ENCODE measurements at regions of chr7 and their contacts with region 1.

Region 1: GRCh38 chr7:106285051-106285854 is 470 bp upstream of the NAMPT start:
- DNase-seq: peak; percentile 100
- ATAC-seq: peak; percentile 83
- H3K4me3 ChIP-seq: peak overlapping the region; percentile 79
- H3K27ac ChIP-seq: peak overlapping the region; percentile 70
- H3K4me1 ChIP-seq: peaks cover 26% of the 10 kb centered on the region
- H3K27me3 ChIP-seq: no peaks in the 10 kb centered on the region
- CTCF ChIP-seq: no peak

Region 2: GRCh38 chr7:105522062-105522936 is 763.0 kb before region 1 on chr7 and contains the start of gene PUS7:
- CTCF ChIA-PET with region 1: no interaction called
- POLR2A ChIA-PET with region 1: no interaction called
- intact Hi-C with region 1: loop called (anchors 2 kb)
- DNase-seq: peak; percentile 97
- ATAC-seq: peak; percentile 90
- H3K4me3 ChIP-seq: peak within 1 kb of the TSS; percentile 91
- H3K27ac ChIP-seq: peak within 1 kb of the TSS; percentile 71
- H3K4me1 ChIP-seq: peaks cover 18% of the 10 kb centered on the region
- H3K27me3 ChIP-seq: no peaks in the 10 kb centered on the region
- CTCF ChIP-seq: no peak
- total RNA-seq, gene PUS7: 22.0 and 37.2 TPM in 2 replicates

Region 3: GRCh38 chr7:106216517-106216922 is 68.7 kb before region 1 on chr7:
- CTCF ChIA-PET with region 1: interaction called, 5 read pairs
- POLR2A ChIA-PET with region 1: interaction called, 20 read pairs
- intact Hi-C with region 1: loop called (anchors 1 kb)
- DNase-seq: peak; percentile 99
- ATAC-seq: peak; percentile 90
- H3K4me3 ChIP-seq: peak overlapping the region; percentile 56
- H3K27ac ChIP-seq: peak overlapping the region; percentile 83
- H3K4me1 ChIP-seq: peaks cover 26% of the 10 kb centered on the region
- H3K27me3 ChIP-seq: no peaks in the 10 kb centered on the region
- CTCF ChIP-seq: no peak

Region 4: DNA sequence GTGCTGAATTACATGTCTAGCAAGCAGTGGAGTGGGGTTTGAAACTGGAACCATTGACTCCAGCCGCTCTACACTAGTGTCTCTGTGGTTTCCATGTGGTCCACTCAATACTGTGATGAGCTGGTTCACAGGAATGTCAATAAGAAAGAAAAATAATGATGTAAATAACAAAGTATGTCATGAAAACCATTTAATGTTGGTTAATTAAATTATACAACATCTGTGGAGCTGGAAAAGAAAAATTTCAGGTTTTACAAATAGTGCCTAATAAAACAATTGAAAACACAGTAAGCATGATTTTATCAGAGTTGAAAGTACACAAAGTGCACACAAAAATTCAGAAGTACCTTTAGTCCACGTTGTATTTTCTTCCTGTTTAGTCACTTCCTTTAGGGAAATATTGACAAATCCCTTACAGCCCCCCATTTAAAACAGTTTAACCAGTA is 28.2 kb after region 1 on chr7:
- CTCF ChIA-PET with region 1: no interaction called
- POLR2A ChIA-PET with region 1: interaction called, 8 read pairs
- intact Hi-C with region 1: loop called (anchors 1 kb)
- DNase-seq: peak; percentile 92
- ATAC-seq: peak; percentile 88
- H3K4me3 ChIP-seq: peak overlapping the region; percentile 41
- H3K27ac ChIP-seq: peak overlapping the region; percentile 72
- H3K4me1 ChIP-seq: peaks cover 50% of the 10 kb centered on the region
- H3K27me3 ChIP-seq: no peaks in the 10 kb centered on the region
- CTCF ChIP-seq: no peak

Region 5: DNA sequence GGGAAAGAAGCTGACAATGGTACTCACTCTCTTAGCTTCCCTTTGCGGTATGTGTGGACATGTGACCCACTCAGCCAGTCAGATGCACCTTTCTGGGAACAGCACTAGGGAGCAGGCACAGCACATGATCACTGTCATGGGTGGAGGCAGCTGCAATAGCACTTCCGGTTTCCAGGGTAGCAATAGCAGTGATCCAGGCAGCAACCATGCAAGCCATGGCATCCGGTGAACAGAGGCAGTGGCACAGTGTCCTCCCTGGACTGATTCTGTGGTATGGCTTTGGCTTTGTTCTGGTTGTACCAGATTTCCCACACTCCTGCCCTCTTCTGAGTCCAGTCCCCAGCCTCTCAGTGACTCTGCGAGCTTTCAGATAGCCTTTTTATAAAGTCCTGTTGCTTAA is 86.4 kb after region 1 on chr7:
- CTCF ChIA-PET with region 1: no interaction called
- POLR2A ChIA-PET with region 1: no interaction called
- intact Hi-C with region 1: no loop called
- DNase-seq: no peak
- ATAC-seq: no peak
- H3K4me3 ChIP-seq: no peak overlapping the region
- H3K27ac ChIP-seq: no peak overlapping the region
- H3K4me1 ChIP-seq: no peaks in the 10 kb centered on the region
- H3K27me3 ChIP-seq: no peaks in the 10 kb centered on the region
- CTCF ChIP-seq: no peak

Region 6: DNA sequence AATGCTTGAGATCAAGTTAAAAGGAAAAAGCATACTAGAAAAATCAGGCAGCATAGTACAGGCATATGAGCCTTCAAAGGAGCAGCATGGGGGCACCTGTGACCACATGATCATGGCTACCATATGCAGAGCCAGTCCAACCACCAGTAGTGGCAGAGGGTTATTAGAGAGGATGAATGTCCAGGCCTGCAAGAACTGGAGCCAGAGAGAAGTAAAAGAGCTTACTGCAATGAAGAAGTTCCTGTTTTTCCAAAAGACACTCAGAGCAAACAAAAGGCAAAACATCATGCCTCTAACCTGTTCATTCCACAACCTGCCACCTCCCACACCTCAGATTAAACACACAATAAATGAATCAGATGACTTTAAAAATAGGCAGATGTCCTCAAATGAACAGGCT is 99.1 kb after region 1 on chr7:
- CTCF ChIA-PET with region 1: no interaction called
- POLR2A ChIA-PET with region 1: interaction called, 12 read pairs
- intact Hi-C with region 1: no loop called
- DNase-seq: peak; percentile 16
- ATAC-seq: peak; percentile 48
- H3K4me3 ChIP-seq: no peak overlapping the region
- H3K27ac ChIP-seq: no peak overlapping the region
- H3K4me1 ChIP-seq: no peaks in the 10 kb centered on the region
- H3K27me3 ChIP-seq: no peaks in the 10 kb centered on the region
- CTCF ChIP-seq: no peak

Region 7: GRCh38 chr7:106717955-106718871 is 433.0 kb after region 1 on chr7:
- CTCF ChIA-PET with region 1: no interaction called
- POLR2A ChIA-PET with region 1: no interaction called
- intact Hi-C with region 1: loop called (anchors 2 kb)
- DNase-seq: peak; percentile 96
- ATAC-seq: peak; percentile 98
- H3K4me3 ChIP-seq: peak overlapping the region; percentile 22; the same call in 1 of the 2 replicates
- H3K27ac ChIP-seq: peak overlapping the region; percentile 91
- H3K4me1 ChIP-seq: peaks cover 26% of the 10 kb centered on the region
- H3K27me3 ChIP-seq: no peaks in the 10 kb centered on the region
- CTCF ChIP-seq: no peak

Measured in PC-3 (cell line).